ENCODE measurements at regions of chr11 and their contacts with region 1.

Region 1: GRCh38 chr11:13335319-13335718 is 57.7 kb downstream of the BMAL1 start:
- DNase-seq: no peak
- H3K4me3 ChIP-seq: no peak overlapping the region
- CTCF ChIP-seq: peak; percentile 73

Region 2: DNA sequence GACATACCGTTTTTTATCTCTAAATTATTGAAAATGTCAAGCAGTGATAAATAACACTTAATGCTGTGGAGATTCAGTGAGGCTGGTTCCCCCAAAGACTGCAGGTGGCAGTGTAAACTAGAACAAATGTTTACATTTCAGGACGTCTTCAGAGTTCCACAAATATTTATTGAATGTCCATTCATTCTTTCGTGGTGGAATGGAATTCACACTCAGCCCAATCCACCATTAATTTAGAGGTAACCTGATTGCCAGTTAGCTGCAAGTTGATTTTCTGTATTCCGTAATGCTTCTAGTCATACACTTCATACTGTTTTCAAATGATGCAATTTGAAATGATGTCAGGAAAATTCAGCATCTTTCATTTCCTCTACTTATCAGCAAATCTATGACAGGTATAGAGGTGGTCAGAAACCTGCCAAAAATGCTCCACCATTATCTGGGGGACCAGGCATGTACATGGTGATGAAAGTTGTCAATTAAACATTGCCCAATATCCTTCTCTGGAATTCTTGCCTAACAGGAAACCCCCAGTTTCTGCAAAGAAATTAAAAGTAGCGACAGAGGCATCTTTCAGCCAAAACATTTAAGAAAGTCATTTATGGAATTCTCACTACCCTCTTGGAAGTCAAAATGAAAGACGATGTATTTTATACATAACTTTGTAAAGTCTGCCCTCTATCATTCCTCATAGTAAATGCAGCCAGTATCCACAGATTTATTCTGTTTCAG is 152.1 kb before region 1 on chr11:
- CTCF ChIA-PET with region 1: interaction called, 11 read pairs
- POLR2A ChIA-PET with region 1: no interaction called
- DNase-seq: peak; percentile 36
- H3K4me3 ChIP-seq: peak overlapping the region; percentile 28
- CTCF ChIP-seq: peak; percentile 24

Region 3: DNA sequence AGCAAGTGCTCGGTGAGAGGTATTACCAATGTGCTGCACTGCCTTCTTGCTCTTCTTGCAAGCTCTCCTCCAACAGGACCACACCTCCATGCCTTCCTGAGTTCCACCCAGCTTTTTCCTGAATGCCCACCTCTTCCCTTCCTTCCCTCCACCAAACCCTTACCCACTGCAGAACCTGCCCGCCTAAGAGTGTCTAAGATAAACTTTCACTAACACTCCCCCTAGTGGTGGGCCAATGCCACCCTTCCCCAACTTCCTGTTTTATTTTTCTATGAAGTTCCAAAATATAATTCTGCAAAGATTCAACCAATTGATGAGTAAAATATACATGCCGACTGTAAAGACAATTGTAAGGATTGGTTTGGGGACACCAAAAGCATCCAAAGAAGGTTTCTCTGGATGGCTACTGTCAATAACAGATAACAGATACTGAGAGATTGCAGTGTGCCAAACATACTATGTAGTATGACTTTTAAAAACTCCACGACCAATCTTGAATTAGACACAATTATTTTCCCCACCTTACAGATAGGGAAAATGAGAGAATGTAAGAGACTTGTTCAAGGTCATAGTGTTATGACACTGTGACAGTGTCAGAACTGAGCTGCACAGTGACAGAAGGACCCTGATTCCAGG is 96.3 kb before region 1 on chr11:
- CTCF ChIA-PET with region 1: interaction called, 26 read pairs
- POLR2A ChIA-PET with region 1: no interaction called
- DNase-seq: no peak
- H3K4me3 ChIP-seq: no peak overlapping the region
- CTCF ChIP-seq: peak; percentile 67

Region 4: DNA sequence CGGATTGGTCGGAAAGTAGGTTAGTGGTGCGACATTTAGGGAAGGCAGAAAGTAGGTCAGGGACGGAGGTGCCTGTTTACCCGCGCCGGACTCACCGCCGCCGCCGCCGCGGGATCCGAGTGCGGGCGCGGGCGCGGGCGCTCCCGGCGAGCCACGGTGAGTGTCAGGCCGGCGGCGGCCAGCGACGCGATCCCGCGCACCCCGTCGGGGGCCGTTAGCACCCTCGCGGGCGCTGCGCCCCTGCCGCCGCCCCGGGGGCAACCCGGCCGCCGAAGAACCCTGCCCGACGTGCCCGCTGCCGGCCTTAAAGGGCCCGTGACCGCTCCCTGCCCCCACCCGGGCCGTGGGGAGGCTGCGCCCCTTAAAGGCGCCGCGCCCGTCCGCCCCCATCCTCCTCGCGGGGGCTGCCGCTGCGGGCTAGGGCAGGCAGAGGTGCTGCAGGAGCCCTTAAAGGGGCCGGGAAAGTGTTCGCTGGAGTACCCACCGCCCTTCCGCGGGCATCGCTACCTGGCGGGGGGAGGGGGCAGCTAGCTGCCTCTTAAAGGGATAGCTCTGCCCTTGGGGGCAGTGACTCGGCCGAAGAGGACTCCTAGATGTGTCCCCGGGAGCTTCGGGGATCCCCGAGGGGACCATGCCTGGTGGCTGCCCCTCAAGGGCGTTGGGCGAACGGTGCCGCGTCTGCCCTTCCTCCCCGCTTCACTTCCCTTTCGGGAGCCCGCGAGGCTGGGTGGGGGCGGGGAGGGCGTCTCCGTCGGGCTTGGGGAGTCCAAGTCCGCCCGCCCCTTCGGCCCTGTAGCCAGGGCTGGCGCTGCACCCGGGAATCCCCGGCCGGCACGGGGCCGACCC is 57.3 kb before region 1 on chr11 and contains the start of gene BMAL1:
- CTCF ChIA-PET with region 1: interaction called, 15 read pairs
- POLR2A ChIA-PET with region 1: no interaction called
- DNase-seq: no peak
- H3K4me3 ChIP-seq: peak within 1 kb of the TSS; percentile 81
- CTCF ChIP-seq: no peak

Region 5: GRCh38 chr11:13316528-13316961 is 18.8 kb before region 1 on chr11:
- CTCF ChIA-PET with region 1: interaction called, 78 read pairs
- POLR2A ChIA-PET with region 1: no interaction called
- DNase-seq: no peak
- H3K4me3 ChIP-seq: no peak overlapping the region
- CTCF ChIP-seq: no peak

Region 6: GRCh38 chr11:13462901-13463778 is 127.8 kb after region 1 on chr11 and contains the start of gene BTBD10:
- CTCF ChIA-PET with region 1: no interaction called
- POLR2A ChIA-PET with region 1: no interaction called
- DNase-seq: peak; percentile 49
- H3K4me3 ChIP-seq: peak within 1 kb of the TSS; percentile 87
- CTCF ChIP-seq: no peak